HAP-1 (cell line): ENCODE measurements at regions of chr5 and their contacts with region 1.

Region 1: DNA sequence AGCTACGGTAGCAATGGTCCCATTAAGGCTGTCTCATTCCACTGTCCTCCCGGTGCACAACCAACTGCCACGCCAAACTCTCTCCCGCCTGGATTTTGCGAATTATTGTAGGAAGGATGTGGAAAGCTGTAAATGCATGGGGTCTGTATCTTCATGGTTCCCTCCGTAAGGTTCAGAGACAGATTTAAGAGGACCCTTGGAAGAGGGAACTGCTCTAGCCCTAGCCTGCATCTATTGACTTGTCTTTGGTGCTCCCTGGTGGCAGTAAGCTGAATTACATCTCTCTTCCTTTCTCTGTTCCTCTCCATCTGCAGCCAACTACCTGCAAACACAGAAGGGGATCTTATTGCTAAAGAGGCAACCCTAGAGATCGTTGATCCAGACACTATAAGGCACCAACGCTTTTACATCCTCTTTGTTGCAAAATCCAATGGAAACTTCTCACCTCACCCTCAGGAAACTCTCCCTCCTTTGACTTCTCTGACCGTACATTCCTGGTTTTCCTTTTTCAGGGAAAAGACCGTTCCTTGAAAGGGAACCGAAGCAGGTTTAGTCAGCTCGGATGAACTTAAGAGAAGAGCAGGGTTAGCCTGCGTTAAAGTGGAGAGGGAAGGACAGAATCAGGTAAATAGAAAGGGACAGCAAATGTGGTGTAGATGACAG is 11.9 kb downstream of the CAPSL start:
- DNase-seq: peak; percentile 57 to 77
- H3K4me3 ChIP-seq: no peak overlapping the region
- H3K4me1 ChIP-seq: peaks cover 10% of the 10 kb centered on the region
- H3K27me3 ChIP-seq: peaks cover 10% of the 10 kb centered on the region

Region 2: GRCh38 chr5:35089334-35090314 is 836.9 kb before region 1 on chr5:
- in situ Hi-C with region 1: loop called (anchors 10 kb)
- DNase-seq: peak; percentile 60 to 82
- H3K4me3 ChIP-seq: no peak overlapping the region
- H3K4me1 ChIP-seq: no peaks in the 10 kb centered on the region
- H3K27me3 ChIP-seq: no peaks in the 10 kb centered on the region

Region 3: GRCh38 chr5:35651002-35651756 is 275.3 kb before region 1 on chr5:
- in situ Hi-C with region 1: loop called (anchors 10 kb)
- DNase-seq: peak; percentile 27 to 48
- H3K4me3 ChIP-seq: no peak overlapping the region
- H3K4me1 ChIP-seq: peaks cover 31% of the 10 kb centered on the region
- H3K27me3 ChIP-seq: no peaks in the 10 kb centered on the region

Region 4: DNA sequence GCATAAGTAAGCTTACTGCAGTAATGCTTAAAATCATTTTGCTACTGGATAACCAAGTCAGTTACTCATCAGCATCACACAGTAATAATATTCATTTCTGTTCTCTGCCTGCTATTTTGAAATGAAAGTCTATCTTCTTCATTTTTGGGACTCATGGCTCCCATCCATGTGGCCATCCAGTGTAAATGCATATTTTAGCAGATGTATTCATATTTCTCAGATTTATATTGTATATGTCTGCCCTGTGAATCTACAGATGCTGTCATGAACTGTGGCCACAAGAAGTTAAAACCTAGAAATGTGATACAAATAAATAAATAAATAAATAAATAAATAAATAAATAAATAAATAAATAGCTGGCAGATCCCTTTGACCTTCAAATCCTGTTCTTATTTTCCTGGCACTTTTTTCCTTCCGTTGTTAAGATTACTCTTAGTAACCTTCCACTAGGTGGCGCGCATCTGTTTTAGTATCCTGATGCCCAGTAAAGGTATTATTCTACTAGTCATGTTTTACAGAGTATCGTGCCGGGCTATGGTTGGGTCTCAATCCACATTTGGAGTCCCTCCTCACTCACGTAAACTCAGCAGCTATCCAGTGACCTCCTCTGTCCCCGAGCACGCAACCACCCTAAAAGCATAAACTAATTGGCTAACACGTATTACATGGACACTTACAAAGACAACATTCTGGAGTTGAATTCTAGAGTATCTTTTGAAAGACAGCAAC is 149.0 kb before region 1 on chr5:
- in situ Hi-C with region 1: loop called (anchors 10 kb)
- DNase-seq: peak; percentile 57 to 85
- H3K4me3 ChIP-seq: no peak overlapping the region
- H3K4me1 ChIP-seq: no peaks in the 10 kb centered on the region
- H3K27me3 ChIP-seq: no peaks in the 10 kb centered on the region

Region 5: GRCh38 chr5:36242534-36243485 is 316.3 kb after region 1 on chr5:
- in situ Hi-C with region 1: no loop called
- DNase-seq: no peak
- H3K4me3 ChIP-seq: no peak overlapping the region; the same call in 1 of the 2 replicates
- H3K4me1 ChIP-seq: peaks cover 25% of the 10 kb centered on the region
- H3K27me3 ChIP-seq: no peaks in the 10 kb centered on the region